CD8-positive, alpha-beta memory T cell (primary cell): ENCODE measurements at regions of chr14 and their contacts with region 1.

Region 1: GRCh38 chr14:24678801-24679247 is 44.8 kb upstream of the GZMB start:
- DNase-seq: peak; percentile 62 to 84 (median 75)
- H3K4me3 ChIP-seq: peak overlapping the region; percentile 33
- H3K4me3 Mint-ChIP-seq: peak overlapping the region; percentile 32 to 98 (median 82)
- H3K27ac ChIP-seq: peak overlapping the region; percentile 22
- H3K27ac Mint-ChIP-seq: peak overlapping the region; percentile 64 to 100 (median 93)
- H3K4me1 ChIP-seq: peaks cover 45% of the 10 kb centered on the region
- H3K4me1 Mint-ChIP-seq: peaks cover 67 to 80% (median 73%) of the 10 kb centered on the region in 3 donors
- H3K27me3 ChIP-seq: no peaks in the 10 kb centered on the region
- H3K27me3 Mint-ChIP-seq: no peaks in the 10 kb centered on the region

Region 2: GRCh38 chr14:24690492-24690891 is 11.7 kb after region 1 on chr14:
- CTCF ChIA-PET with region 1: interaction called, 20 read pairs
- POLR2A ChIA-PET with region 1: interaction called, 12 read pairs
- DNase-seq: peak in 1 of 5 donors; percentile 24
- H3K4me3 ChIP-seq: no peak overlapping the region
- H3K4me3 Mint-ChIP-seq: no peak overlapping the region
- H3K27ac ChIP-seq: no peak overlapping the region
- H3K27ac Mint-ChIP-seq: peak overlapping the region in 2 of 8 donors; percentile 24 to 33
- H3K4me1 ChIP-seq: peaks cover 39% of the 10 kb centered on the region
- H3K4me1 Mint-ChIP-seq: peaks cover 29 to 39% (median 31%) of the 10 kb centered on the region in 3 donors
- H3K27me3 ChIP-seq: no peaks in the 10 kb centered on the region
- H3K27me3 Mint-ChIP-seq: no peaks in the 10 kb centered on the region